Testis (tissue), 5 donors: ENCODE measurements at regions of chr21 and their contacts with region 1.

Region 1: GRCh38 chr21:36156339-36156814 is 247 bp upstream of the DOP1B start:
- DNase-seq: peak; percentile 100
- H3K4me3 ChIP-seq: peak overlapping the region; percentile 78 to 92
- H3K27ac ChIP-seq: peak overlapping the region; percentile 59 to 82
- H3K4me1 ChIP-seq: peaks cover 5% of the 10 kb centered on the region
- H3K27me3 ChIP-seq: no peaks in the 10 kb centered on the region
- CTCF ChIP-seq: no peak
- POLR2A ChIP-seq: no peak

Region 2: GRCh38 chr21:35525443-35525842 is 630.9 kb before region 1 on chr21:
- intact Hi-C with region 1: no loop called
- DNase-seq: no peak
- H3K4me3 ChIP-seq: no peak overlapping the region
- H3K27ac ChIP-seq: no peak overlapping the region
- H3K4me1 ChIP-seq: peaks cover 8% of the 10 kb centered on the region
- H3K27me3 ChIP-seq: no peaks in the 10 kb centered on the region
- CTCF ChIP-seq: no peak
- POLR2A ChIP-seq: no peak

Region 3: DNA sequence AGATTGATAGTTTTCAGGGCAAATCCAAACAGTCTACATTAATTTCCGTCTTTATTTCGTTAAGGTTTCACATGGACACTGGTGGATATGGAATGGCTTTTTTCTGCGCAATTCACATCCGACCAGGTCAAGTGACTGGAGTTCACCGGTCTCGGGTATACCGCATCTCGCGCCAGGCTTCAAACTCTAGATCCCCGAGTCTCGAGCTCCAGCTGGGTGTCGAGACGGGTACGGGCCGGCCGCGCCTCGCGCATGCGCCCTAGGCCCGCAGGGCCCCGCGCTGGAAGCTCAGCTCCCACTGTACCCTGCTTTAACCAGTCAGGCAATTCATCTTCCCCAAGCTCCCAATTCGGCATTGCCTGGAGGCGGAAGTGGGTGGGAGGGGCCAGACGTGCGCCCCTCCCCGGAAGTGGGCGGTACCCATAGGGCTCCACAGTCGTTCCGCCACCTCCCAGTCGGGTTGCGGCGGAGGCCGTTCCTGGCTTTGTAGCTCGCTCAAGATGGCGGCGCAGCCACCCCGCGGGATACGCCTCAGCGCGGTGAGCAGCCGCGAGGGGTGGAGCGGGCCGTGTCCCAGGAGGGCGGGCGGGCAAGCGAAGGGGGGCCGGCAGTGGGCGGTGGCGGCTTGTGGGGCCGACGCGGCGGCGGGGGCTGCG is 163.5 kb after region 1 on chr21 and contains the start of gene MORC3:
- intact Hi-C with region 1: loop called (anchors 10 kb)
- DNase-seq: peak; percentile 98
- H3K4me3 ChIP-seq: peak within 1 kb of the TSS; percentile 92 to 98
- H3K27ac ChIP-seq: peak within 1 kb of the TSS; percentile 96 to 98
- H3K4me1 ChIP-seq: peaks cover 10% of the 10 kb centered on the region
- H3K27me3 ChIP-seq: no peaks in the 10 kb centered on the region
- CTCF ChIP-seq: no peak
- POLR2A ChIP-seq: peak; percentile 72
- total RNA-seq, gene MORC3: 45.6 to 48.0 TPM